BJ (cell line): ENCODE measurements at regions of chr20 and their contacts with region 1.

Region 1: DNA sequence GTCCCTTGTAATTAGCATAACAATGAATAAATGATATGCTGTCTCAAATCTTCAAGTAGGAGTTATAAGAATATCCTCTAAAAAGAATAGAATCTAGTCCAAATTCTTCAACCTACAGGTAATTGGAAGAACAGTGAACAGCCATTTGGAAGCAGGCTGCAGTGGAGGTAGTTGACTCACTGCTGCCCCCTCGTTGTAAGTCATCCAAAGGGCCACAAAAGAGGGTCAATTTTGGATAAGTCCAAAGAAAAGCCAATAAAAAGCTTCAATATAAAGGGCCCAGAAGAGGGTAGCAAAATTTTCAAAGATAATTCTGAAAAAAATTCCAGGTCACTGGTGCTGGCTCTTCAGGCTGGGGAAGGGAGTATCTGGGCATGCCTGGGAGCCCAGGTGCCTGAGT is 60.8 kb upstream of the SSTR4 start:
- DNase-seq: no peak
- H3K4me3 ChIP-seq: no peak overlapping the region
- H3K27me3 ChIP-seq: no peaks in the 10 kb centered on the region
- CTCF ChIP-seq: peak; percentile 54

Region 2: DNA sequence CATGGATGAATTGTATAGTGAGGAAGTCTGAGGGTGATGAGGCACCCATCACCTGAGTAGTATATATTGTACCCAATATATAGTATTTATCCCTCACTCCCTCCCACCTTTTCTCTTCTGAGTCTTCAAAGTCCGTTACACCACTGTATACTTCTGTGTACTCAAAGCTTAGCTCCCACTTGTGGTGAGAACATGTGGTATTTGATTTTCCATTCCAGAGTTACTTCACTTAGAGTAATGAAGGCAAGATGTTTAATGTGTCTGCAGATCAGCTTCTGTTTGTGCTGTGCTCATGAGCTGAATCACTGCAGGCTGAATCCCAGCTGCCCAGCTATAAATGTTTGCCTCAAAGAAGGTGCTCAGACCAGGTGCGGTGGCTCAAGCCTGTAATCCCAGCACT is 250.7 kb before region 1 on chr20:
- CTCF ChIA-PET with region 1: interaction called, 19 read pairs
- POLR2A ChIA-PET with region 1: no interaction called
- DNase-seq: no peak
- H3K4me3 ChIP-seq: no peak overlapping the region
- H3K27me3 ChIP-seq: no peaks in the 10 kb centered on the region; the same call in 1 of the 2 replicates
- CTCF ChIP-seq: no peak

Region 3: DNA sequence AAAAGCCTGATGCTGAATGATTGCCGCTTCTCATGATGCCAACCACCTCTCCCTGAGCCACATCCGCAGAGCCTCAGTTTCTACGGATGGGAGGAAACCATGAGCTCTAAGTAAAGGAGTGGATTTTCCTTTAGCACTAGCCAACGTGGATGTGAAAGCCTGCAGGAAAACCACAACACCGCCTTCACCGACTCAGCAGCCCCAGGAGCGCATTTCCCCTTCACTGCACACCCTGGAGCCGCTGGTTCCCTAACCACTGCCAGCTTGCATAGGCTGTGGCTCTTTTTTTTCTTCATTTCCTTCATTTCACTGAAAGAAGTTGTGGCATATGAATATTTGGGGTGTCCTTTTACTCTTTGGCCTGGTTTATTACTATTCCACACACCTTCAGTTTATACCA is 10.3 kb after region 1 on chr20:
- CTCF ChIA-PET with region 1: interaction called, 10 read pairs
- POLR2A ChIA-PET with region 1: no interaction called
- DNase-seq: no peak
- H3K4me3 ChIP-seq: no peak overlapping the region
- H3K27me3 ChIP-seq: no peaks in the 10 kb centered on the region
- CTCF ChIP-seq: no peak